IMR-90 (cell line): ENCODE measurements at regions of chr9 and their contacts with region 1.

Region 1: DNA sequence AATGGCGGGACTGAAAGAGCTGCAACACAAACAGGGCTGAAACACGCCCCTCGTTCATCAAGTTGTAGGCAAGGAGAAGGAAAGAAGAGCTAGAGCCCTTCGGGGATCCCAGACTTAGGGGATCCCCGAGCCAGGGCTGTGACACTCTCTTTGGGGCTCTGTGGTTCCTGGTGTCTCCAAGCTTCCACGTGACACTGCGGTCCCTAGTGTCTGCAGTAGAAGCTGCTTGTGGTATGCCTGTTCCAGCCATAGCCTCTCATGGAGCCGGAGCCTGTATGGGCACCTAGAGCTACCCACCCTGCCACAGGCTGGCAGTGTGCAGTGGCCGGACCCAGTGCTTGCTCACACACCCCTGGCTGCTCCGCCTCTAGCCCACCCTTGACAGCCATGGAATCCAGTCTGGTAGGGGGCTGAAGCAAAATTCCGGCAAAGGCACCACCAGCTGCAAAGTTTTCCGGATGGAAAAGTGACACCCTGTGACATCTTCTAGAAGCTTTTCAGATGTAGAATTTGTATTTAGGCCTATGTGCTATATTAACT is 1439.6 kb upstream of the ACO1 start:
- DNase-seq: no peak
- ATAC-seq: no peak
- H3K4me3 ChIP-seq: no peak overlapping the region
- H3K27ac ChIP-seq: no peak overlapping the region
- H3K4me1 ChIP-seq: no peaks in the 10 kb centered on the region
- H3K27me3 ChIP-seq: no peaks in the 10 kb centered on the region
- CTCF ChIP-seq: no peak
- POLR2A ChIP-seq: no peak
- RAD21 ChIP-seq: no peak

Region 2: GRCh38 chr9:30688801-30689200 is 256.0 kb before region 1 on chr9:
- CTCF ChIA-PET with region 1: no interaction called
- POLR2A ChIA-PET with region 1: no interaction called
- dilution Hi-C with region 1: no loop called
- in situ Hi-C with region 1: no loop called
- intact Hi-C with region 1: no loop called
- DNase-seq: no peak
- ATAC-seq: no peak
- H3K4me3 ChIP-seq: no peak overlapping the region
- H3K27ac ChIP-seq: no peak overlapping the region
- H3K4me1 ChIP-seq: no peaks in the 10 kb centered on the region
- H3K27me3 ChIP-seq: no peaks in the 10 kb centered on the region
- CTCF ChIP-seq: no peak
- POLR2A ChIP-seq: no peak
- RAD21 ChIP-seq: no peak

Region 3: GRCh38 chr9:30900706-30901105 is 44.1 kb before region 1 on chr9:
- CTCF ChIA-PET with region 1: no interaction called
- POLR2A ChIA-PET with region 1: no interaction called
- dilution Hi-C with region 1: no loop called
- in situ Hi-C with region 1: no loop called
- intact Hi-C with region 1: loop called (anchors 10 kb)
- DNase-seq: no peak
- ATAC-seq: no peak
- H3K4me3 ChIP-seq: no peak overlapping the region
- H3K27ac ChIP-seq: no peak overlapping the region
- H3K4me1 ChIP-seq: no peaks in the 10 kb centered on the region
- H3K27me3 ChIP-seq: no peaks in the 10 kb centered on the region
- CTCF ChIP-seq: no peak
- POLR2A ChIP-seq: no peak
- RAD21 ChIP-seq: no peak